Endothelial cell of umbilical vein (primary cell): ENCODE measurements at regions of chr5 and their contacts with region 1.

Region 1: GRCh38 chr5:15794052-15794985 is 294.3 kb downstream of the FBXL7 start:
- DNase-seq: peak; percentile 74
- H3K4me3 ChIP-seq: no peak overlapping the region
- H3K27ac ChIP-seq: peak overlapping the region; percentile 41
- H3K4me1 ChIP-seq: peaks cover 30% of the 10 kb centered on the region
- H3K27me3 ChIP-seq: no peaks in the 10 kb centered on the region
- CTCF ChIP-seq: peak in 1 of 2 donors; percentile 15
- POLR2A ChIP-seq: no peak

Region 2: GRCh38 chr5:15383469-15383868 is 410.9 kb before region 1 on chr5:
- CTCF ChIA-PET with region 1: interaction called, 6 read pairs
- POLR2A ChIA-PET with region 1: no interaction called
- dilution Hi-C with region 1: no loop called
- intact Hi-C with region 1: loop called (anchors 1 kb)
- DNase-seq: peak; percentile 18
- H3K4me3 ChIP-seq: no peak overlapping the region
- H3K27ac ChIP-seq: no peak overlapping the region
- H3K4me1 ChIP-seq: no peaks in the 10 kb centered on the region
- H3K27me3 ChIP-seq: peaks cover 0 to 3% of the 10 kb centered on the region in 2 experiments
- CTCF ChIP-seq: peak; percentile 16 to 26
- POLR2A ChIP-seq: no peak

Region 3: DNA sequence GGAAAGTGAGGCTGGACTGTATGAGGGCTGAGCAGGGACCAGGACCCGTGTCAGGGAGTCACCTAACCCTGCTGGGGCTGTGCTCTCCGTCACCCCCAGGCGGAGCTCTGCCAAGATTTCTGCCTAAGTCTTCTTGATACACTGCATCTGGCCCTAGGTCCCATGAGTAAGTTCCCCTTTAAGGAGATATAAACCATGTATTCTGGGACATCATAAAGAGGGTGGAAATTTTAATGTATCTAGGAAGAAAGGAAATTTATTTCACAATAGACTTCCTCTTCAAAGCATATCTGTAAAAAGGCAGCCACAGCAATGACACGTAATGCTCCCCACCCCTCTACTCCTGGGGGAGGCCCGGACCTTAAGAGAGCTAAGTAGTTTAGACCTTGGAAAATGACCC is 111.0 kb before region 1 on chr5:
- CTCF ChIA-PET with region 1: interaction called, 7 read pairs
- POLR2A ChIA-PET with region 1: no interaction called
- dilution Hi-C with region 1: no loop called
- intact Hi-C with region 1: loop called (anchors 1 kb)
- DNase-seq: peak; percentile 76
- H3K4me3 ChIP-seq: no peak overlapping the region
- H3K27ac ChIP-seq: no peak overlapping the region
- H3K4me1 ChIP-seq: peaks cover 4% of the 10 kb centered on the region
- H3K27me3 ChIP-seq: no peaks in the 10 kb centered on the region
- CTCF ChIP-seq: peak; percentile 44 to 58
- POLR2A ChIP-seq: no peak